ENCODE measurements at regions of chr17 and their contacts with region 1.

Region 1: GRCh38 chr17:68497885-68498319 is 14.3 kb upstream of the PRKAR1A start:
- DNase-seq: no peak
- H3K4me3 ChIP-seq: no peak overlapping the region
- H3K27ac ChIP-seq: no peak overlapping the region
- H3K4me1 ChIP-seq: no peaks in the 10 kb centered on the region
- H3K27me3 ChIP-seq: 0 out of 2 replicates have a peak, but pooled peaks cover 5% of the 10 kb centered on the region
- CTCF ChIP-seq: no peak

Region 2: GRCh38 chr17:68273722-68274121 is 224.2 kb before region 1 on chr17:
- CTCF ChIA-PET with region 1: no interaction called
- POLR2A ChIA-PET with region 1: no interaction called
- intact Hi-C with region 1: no loop called
- DNase-seq: no peak
- H3K4me3 ChIP-seq: no peak overlapping the region
- H3K27ac ChIP-seq: no peak overlapping the region
- H3K4me1 ChIP-seq: no peaks in the 10 kb centered on the region
- H3K27me3 ChIP-seq: no peaks in the 10 kb centered on the region
- CTCF ChIP-seq: no peak

Region 3: GRCh38 chr17:68462381-68463210 is 35.3 kb before region 1 on chr17:
- CTCF ChIA-PET with region 1: no interaction called
- POLR2A ChIA-PET with region 1: no interaction called
- intact Hi-C with region 1: no loop called
- DNase-seq: peak; percentile 66 to 78
- H3K4me3 ChIP-seq: no peak overlapping the region
- H3K27ac ChIP-seq: no peak overlapping the region
- H3K4me1 ChIP-seq: peaks cover 16% of the 10 kb centered on the region; the same call in 1 of the 2 replicates
- H3K27me3 ChIP-seq: no peaks in the 10 kb centered on the region
- CTCF ChIP-seq: peak; percentile 87

Region 4: GRCh38 chr17:69166957-69167356 is 669.1 kb after region 1 on chr17:
- CTCF ChIA-PET with region 1: interaction called, 17 read pairs
- POLR2A ChIA-PET with region 1: no interaction called
- intact Hi-C with region 1: no loop called
- DNase-seq: no peak
- H3K4me3 ChIP-seq: no peak overlapping the region
- H3K27ac ChIP-seq: no peak overlapping the region
- H3K4me1 ChIP-seq: no peaks in the 10 kb centered on the region
- H3K27me3 ChIP-seq: no peaks in the 10 kb centered on the region
- CTCF ChIP-seq: no peak

Measured in PC-9 (cell line).